Activated naive CD8-positive, alpha-beta T cell treated with anti-CD3 and anti-CD28 coated beads, Interleukin-2, amount 10 ng/mL, durations not matched to agents 7 days and 5 days (primary cell): ENCODE measurements at regions of chr10 and their contacts with region 1.

Region 1: DNA sequence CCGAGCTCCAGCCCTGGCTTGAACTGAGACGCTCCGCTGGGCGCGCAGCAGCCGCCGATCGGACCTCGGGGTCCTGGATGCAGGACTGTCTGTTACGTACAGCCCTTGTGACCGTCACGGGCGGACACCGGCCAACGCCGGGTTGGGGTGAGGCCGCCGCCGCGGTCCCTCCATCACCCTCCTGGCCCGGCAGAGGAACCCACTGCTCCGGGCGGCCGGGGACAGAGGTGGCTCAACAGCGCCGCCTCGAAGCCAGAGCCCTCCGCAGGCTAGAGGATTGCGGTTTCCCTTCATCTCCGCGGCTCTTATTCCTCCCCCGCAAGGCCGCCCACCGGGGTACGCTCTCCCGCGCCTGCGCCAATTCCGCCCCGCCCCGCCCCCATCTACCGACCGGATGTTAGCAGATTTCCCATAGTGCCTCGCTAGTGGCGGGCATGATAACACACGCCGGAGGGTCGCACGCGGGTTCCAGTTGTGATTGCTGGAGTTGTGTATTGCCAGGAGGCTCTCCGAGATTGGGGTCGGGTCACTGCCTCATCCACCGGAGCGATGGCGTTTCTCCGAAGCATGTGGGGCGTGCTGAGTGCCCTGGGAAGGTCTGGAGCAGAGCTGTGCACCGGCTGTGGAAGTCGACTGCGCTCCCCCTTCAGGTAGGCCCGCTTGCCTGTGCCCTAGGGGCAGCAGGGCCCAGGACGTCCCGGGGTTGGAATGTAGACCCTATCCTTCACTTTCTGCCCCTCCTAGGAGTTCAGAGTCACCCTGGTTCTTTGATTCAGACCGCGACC is at the start of gene TFAM:
- DNase-seq: peak; percentile 95
- ATAC-seq: peak; percentile 89
- H3K4me3 Mint-ChIP-seq: peak within 1 kb of the TSS; percentile 100
- H3K27ac Mint-ChIP-seq: peak within 1 kb of the TSS; percentile 99
- H3K4me1 Mint-ChIP-seq: peaks cover 25% of the 10 kb centered on the region
- H3K27me3 Mint-ChIP-seq: no peaks in the 10 kb centered on the region
- total RNA-seq, gene TFAM: 52.7 to 56.8 TPM

Region 2: GRCh38 chr10:58268870-58269605 is 116.2 kb before region 1 on chr10 and contains the start of gene CISD1:
- POLR2A ChIA-PET with region 1: interaction called, 18 read pairs
- DNase-seq: peak; percentile 90
- ATAC-seq: peak; percentile 81
- H3K4me3 Mint-ChIP-seq: peak within 1 kb of the TSS; percentile 93
- H3K27ac Mint-ChIP-seq: peak within 1 kb of the TSS; percentile 97
- H3K4me1 Mint-ChIP-seq: peaks cover 26% of the 10 kb centered on the region
- H3K27me3 Mint-ChIP-seq: no peaks in the 10 kb centered on the region
- total RNA-seq, gene CISD1: 23.9 to 25.8 TPM

Region 3: DNA sequence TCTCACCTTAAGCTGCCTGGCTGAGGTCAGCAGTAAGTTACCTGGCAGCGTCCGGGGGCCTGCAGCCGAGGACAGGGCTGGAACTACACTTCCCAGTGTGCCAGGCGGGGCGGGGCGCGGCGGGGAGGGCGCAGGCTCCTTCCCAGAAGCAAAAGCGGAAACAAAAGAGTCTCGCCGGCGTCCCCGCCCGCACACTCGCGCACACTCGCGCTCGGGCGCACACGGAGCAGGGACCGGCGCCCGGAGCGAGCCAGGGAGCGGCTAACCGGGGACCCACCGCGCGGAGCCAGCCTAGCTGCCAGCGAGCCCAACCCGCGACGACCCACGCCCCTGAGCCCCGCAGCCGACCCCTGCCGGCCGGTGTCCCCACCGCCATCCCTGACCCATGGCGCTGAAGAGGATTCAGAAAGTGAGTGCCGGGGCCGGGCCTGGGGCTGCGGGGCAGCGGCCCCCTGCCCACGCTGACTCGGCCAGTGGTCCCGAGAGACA is 50.3 kb before region 1 on chr10 and contains the start of gene UBE2D1:
- POLR2A ChIA-PET with region 1: interaction called, 17 read pairs
- DNase-seq: peak; percentile 84
- ATAC-seq: peak; percentile 95
- H3K4me3 Mint-ChIP-seq: peak within 1 kb of the TSS; percentile 96
- H3K27ac Mint-ChIP-seq: peak within 1 kb of the TSS; percentile 71
- H3K4me1 Mint-ChIP-seq: peaks cover 27% of the 10 kb centered on the region
- H3K27me3 Mint-ChIP-seq: peaks cover 9% of the 10 kb centered on the region
- total RNA-seq, gene UBE2D1: 10.9 to 12.7 TPM